WTC11 (cell line): ENCODE measurements at regions of chr20 and their contacts with region 1.

Region 1: GRCh38 chr20:5205348-5206210 is 78.8 kb downstream of the CDS2 start:
- DNase-seq: peak; percentile 87
- ATAC-seq: peak; percentile 100
- H3K4me3 Mint-ChIP-seq: no peak overlapping the region
- H3K27ac Mint-ChIP-seq: no peak overlapping the region
- H3K4me1 Mint-ChIP-seq: peaks cover 3% of the 10 kb centered on the region; the same call in 1 of the 2 replicates
- H3K27me3 Mint-ChIP-seq: no peaks in the 10 kb centered on the region
- CTCF ChIP-seq: peak; percentile 80

Region 2: DNA sequence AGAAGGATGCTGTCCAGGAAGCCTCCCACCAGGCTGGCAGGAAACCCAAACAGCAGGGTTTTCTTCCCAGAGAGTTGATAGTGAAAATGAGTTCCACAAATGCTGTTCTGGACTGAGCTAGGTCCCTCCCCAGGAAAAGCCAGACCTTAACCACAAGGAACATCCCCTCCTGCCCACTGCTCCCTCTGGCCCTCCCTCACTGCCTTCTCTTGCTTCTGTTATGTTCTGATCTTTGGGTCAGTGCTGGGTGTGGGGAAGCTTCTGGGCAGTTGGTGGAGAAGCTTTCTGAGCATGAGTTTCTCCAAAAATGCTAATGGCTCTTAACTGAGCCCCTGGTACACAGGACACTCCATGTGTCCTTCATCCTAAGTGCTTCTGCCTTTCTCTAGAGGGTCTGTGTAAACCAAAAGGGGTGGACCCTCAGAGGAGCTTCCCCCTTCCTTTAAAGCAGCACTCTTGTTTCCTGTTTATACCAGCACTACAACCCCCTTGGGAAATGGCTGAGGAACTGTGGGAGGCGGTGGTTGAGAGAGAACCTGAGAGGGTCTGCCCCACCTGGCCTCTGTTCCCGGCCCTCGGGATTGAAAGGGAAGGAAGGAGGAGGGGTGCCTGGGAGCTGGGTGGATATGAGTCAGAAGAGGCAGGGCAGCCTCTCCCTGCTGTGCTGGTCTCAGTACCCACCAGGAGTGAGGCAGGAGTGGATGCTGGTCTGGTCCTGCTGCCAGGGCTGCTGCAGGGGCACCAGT is 36.8 kb before region 1 on chr20:
- CTCF ChIA-PET with region 1: no interaction called
- POLR2A ChIA-PET with region 1: no interaction called
- DNase-seq: peak; percentile 41
- ATAC-seq: peak; percentile 80
- H3K4me3 Mint-ChIP-seq: no peak overlapping the region
- H3K27ac Mint-ChIP-seq: peak overlapping the region; percentile 93
- H3K4me1 Mint-ChIP-seq: peaks cover 55% of the 10 kb centered on the region
- H3K27me3 Mint-ChIP-seq: no peaks in the 10 kb centered on the region
- CTCF ChIP-seq: no peak

Region 3: DNA sequence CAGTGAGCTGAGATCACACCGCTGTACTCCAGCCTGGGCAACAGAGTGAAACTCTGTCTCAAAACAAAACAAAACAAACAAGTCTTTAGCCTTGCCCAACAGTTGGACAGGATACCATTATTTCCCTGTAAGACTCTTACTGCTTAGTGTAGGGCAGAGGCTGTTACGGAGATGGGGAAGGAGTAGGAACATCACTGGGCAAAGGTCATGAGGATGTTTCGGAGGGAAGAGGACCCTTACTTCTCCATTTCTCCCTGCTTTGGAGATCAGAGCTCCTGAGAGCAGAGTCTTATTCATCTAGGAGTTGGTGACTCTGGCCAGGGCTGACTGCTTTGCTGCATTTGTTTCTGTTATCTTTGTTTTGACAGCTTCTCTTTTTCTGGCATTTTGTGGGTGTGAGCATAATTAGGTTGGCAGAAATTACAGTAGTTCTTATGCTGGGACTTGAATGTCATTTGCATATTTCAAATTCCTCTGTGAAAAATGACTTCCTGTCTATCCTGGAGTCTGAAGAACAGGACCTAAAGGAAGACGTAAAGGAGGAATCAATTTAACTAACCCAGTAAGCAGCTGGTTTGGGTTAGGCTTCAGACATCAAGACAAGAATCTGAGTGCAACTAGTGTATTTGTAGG is 10.2 kb after region 1 on chr20:
- CTCF ChIA-PET with region 1: interaction called, 77 read pairs
- POLR2A ChIA-PET with region 1: no interaction called
- DNase-seq: no peak
- ATAC-seq: no peak
- H3K4me3 Mint-ChIP-seq: no peak overlapping the region
- H3K27ac Mint-ChIP-seq: no peak overlapping the region
- H3K4me1 Mint-ChIP-seq: peaks cover 14% of the 10 kb centered on the region
- H3K27me3 Mint-ChIP-seq: no peaks in the 10 kb centered on the region; the same call in 1 of the 2 replicates
- CTCF ChIP-seq: no peak

Region 4: GRCh38 chr20:5316188-5317158 is 110.9 kb after region 1 on chr20 and contains the start of gene PROKR2:
- CTCF ChIA-PET with region 1: interaction called, 39 read pairs
- POLR2A ChIA-PET with region 1: no interaction called
- DNase-seq: peak; percentile 80
- ATAC-seq: peak; percentile 74
- H3K4me3 Mint-ChIP-seq: peak within 1 kb of the TSS; percentile 89
- H3K27ac Mint-ChIP-seq: no peak within 1 kb of the TSS
- H3K4me1 Mint-ChIP-seq: peaks cover 15% of the 10 kb centered on the region
- H3K27me3 Mint-ChIP-seq: peaks cover 59% of the 10 kb centered on the region
- CTCF ChIP-seq: no peak
- total RNA-seq, gene PROKR2: 1.5 to 2.6 TPM (median 2.0 TPM) in 3 replicates

Region 5: DNA sequence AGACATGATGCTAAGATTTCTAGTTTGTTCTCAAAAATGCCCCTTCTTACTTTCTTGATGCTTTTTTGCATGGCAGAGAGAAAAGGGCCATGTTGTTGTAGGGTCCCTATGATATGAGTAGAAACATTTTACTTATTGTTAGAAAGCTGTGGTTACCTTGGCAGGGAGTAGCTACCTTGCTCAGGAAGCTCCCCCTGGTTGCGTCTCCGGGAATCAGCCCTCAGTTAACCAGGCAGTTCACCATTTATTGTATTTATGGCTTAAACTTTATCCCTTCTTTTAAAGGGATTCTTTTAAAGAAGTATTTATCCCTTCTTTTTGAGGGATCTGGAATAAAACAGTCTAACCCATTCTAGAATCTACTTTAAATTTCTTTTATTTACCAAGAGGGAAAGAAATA is 225.1 kb after region 1 on chr20:
- CTCF ChIA-PET with region 1: interaction called, 17 read pairs
- POLR2A ChIA-PET with region 1: no interaction called
- DNase-seq: no peak
- ATAC-seq: peak; percentile 50
- H3K4me3 Mint-ChIP-seq: no peak overlapping the region
- H3K27ac Mint-ChIP-seq: no peak overlapping the region
- H3K4me1 Mint-ChIP-seq: no peaks in the 10 kb centered on the region
- H3K27me3 Mint-ChIP-seq: no peaks in the 10 kb centered on the region
- CTCF ChIP-seq: no peak